ENCODE measurements at regions of chr3 and their contacts with region 1.

Region 1: GRCh38 chr3:121883507-121883906 is 10.7 kb upstream of the SLC15A2 start:
- DNase-seq: peak in 1 of 4 donors; percentile 16
- ATAC-seq: no peak
- H3K4me3 ChIP-seq: no peak overlapping the region
- H3K27ac ChIP-seq: no peak overlapping the region
- H3K4me1 ChIP-seq: no peaks in the 10 kb centered on the region
- H3K27me3 ChIP-seq: no peaks in the 10 kb centered on the region
- CTCF ChIP-seq: peak in 6 of 7 experiments; percentile 15 to 55 (median 42)
- POLR2A ChIP-seq: no peak

Region 2: DNA sequence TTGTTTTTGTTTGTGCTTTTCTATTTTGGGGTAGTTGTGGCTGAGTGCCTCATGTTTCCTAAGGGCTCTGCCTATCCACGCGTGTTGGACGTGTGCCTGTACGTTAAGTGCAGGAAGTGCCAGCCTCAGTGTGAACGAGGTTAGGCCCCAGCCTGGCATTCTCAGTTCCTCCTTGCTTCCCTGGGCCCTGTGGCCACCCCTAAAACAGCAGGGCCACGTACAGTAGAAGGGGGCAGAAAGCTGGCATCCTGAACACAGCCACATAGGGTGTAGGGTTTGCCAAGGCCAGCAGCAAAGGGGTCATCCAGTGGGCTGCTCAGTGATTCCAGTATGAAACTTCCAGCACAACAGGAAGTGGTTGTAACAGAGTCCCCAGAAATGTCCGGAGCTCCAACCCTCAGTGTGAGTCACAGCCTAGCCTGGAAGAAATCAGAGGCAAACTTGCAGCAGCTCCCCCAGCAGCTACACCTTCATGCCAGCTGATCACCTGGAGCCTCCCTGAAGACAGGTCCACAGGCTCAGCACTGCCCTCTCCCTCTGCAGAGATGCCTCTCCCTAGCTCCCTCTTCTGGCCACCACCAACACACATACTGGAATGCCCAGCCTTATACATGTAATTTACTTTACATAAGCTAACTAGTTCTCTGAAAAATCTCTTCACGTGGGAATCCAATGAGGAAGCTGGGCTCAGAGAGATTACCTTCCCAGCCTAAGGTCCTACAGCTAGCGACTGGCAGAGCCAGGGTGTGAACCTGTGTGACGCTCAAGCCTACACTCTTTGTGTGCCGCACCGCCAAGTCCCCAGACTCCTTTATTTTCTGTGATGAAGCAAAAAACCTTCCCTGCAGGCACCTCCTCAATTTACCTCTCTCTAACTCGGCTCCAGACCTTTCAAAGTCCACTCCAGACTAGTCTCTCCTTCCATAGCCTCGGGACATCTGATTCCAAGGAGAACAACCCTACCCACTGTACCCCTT is 111.9 kb after region 1 on chr3:
- intact Hi-C with region 1: loop called (anchors 10 kb)
- DNase-seq: peak; percentile 76 to 86 (median 83)
- ATAC-seq: peak; percentile 89
- H3K4me3 ChIP-seq: no peak overlapping the region
- H3K27ac ChIP-seq: peak overlapping the region in 3 of 4 donors; percentile 3 to 53 (median 19)
- H3K4me1 ChIP-seq: no peaks in the 10 kb centered on the region
- H3K27me3 ChIP-seq: no peaks in the 10 kb centered on the region
- CTCF ChIP-seq: peak; percentile 44 to 77 (median 74)
- POLR2A ChIP-seq: no peak

Region 3: GRCh38 chr3:122475316-122475715 is 591.8 kb after region 1 on chr3:
- intact Hi-C with region 1: no loop called
- DNase-seq: no peak
- ATAC-seq: no peak
- H3K4me3 ChIP-seq: no peak overlapping the region
- H3K27ac ChIP-seq: no peak overlapping the region
- H3K4me1 ChIP-seq: no peaks in the 10 kb centered on the region
- H3K27me3 ChIP-seq: no peaks in the 10 kb centered on the region
- CTCF ChIP-seq: no peak
- POLR2A ChIP-seq: no peak